PC-9 (cell line): ENCODE measurements at regions of chr10 and their contacts with region 1.

Region 1: GRCh38 chr10:31864834-31865518 is 63.7 kb downstream of the ARHGAP12 start:
- DNase-seq: no peak
- H3K4me3 ChIP-seq: no peak overlapping the region
- H3K27ac ChIP-seq: 0 out of 2 replicates have a peak overlapping the region, but pooled peaks have one; percentile 23
- H3K4me1 ChIP-seq: 0 out of 2 replicates have a peak, but pooled peaks cover 6% of the 10 kb centered on the region
- H3K27me3 ChIP-seq: no peaks in the 10 kb centered on the region
- CTCF ChIP-seq: no peak

Region 2: GRCh38 chr10:31851216-31851615 is 13.8 kb before region 1 on chr10:
- CTCF ChIA-PET with region 1: no interaction called
- POLR2A ChIA-PET with region 1: no interaction called
- intact Hi-C with region 1: no loop called
- DNase-seq: no peak
- H3K4me3 ChIP-seq: no peak overlapping the region
- H3K27ac ChIP-seq: no peak overlapping the region
- H3K4me1 ChIP-seq: no peaks in the 10 kb centered on the region
- H3K27me3 ChIP-seq: no peaks in the 10 kb centered on the region
- CTCF ChIP-seq: no peak

Region 3: DNA sequence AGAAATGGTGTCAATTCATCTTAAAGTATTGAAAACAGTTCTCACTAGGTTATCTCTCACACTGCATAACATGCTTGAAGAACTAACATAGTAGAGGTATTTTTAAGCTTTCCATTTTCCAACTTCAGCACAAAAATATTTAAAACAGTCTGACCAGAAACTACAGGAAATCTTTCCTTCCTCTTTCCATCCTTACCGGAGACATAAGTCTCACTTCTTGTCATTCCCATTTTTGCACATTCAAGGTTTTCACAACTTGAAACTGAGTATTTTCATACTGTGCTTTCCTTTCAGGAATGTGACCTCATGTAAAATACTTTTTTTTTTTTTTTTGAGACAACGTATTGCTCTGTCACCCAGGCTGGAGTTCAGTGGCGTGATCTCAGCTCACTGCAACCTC is 18.4 kb after region 1 on chr10:
- CTCF ChIA-PET with region 1: no interaction called
- POLR2A ChIA-PET with region 1: interaction called, 14 read pairs
- intact Hi-C with region 1: no loop called
- DNase-seq: no peak
- H3K4me3 ChIP-seq: no peak overlapping the region
- H3K27ac ChIP-seq: no peak overlapping the region
- H3K4me1 ChIP-seq: no peaks in the 10 kb centered on the region
- H3K27me3 ChIP-seq: no peaks in the 10 kb centered on the region
- CTCF ChIP-seq: no peak

Region 4: DNA sequence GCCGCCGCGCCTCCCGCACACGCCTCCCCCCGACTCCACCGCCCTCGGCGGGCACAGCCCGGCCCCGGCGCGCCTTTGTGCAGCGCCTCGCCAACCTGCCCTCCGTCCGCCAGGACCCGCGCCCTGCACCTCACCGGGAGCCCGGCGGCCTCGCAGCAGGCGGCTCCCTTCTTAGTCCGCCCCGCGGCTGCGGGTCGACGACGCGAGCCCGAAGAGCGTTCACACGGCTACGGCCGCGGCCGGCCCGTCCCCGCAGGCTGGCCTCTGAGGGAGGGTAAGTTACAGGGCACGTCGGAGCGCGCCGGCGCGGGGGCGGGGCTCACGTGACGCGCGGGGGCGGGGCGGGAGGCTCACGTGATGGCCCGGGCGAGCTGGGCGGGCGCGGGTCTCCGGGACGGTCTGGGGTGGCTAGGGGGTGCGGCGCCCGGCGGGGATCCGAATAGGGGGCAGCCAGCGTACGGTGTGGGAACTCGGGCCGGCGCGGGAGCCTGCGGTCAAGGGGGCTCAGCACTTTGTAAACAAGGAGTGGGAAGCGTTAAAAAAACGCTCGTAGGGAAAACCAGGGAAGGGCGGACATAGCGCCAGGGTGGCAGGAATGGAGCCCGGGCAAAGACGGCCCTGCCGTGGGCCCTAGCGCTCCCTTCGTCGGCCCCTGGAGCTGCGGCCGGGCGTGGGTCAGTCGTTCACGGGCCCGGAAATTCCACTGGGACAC is 63.7 kb after region 1 on chr10 and contains the start of gene ARHGAP12:
- CTCF ChIA-PET with region 1: interaction called, 3 read pairs
- POLR2A ChIA-PET with region 1: interaction called, 10 read pairs
- intact Hi-C with region 1: loop called (anchors 5 kb)
- DNase-seq: peak; percentile 51 to 91
- H3K4me3 ChIP-seq: peak within 1 kb of the TSS; percentile 77
- H3K27ac ChIP-seq: peak within 1 kb of the TSS; percentile 69
- H3K4me1 ChIP-seq: peaks cover 49% of the 10 kb centered on the region
- H3K27me3 ChIP-seq: no peaks in the 10 kb centered on the region
- CTCF ChIP-seq: no peak
- total RNA-seq, gene ARHGAP12: 34.3 and 51.9 TPM in 2 replicates

Region 5: DNA sequence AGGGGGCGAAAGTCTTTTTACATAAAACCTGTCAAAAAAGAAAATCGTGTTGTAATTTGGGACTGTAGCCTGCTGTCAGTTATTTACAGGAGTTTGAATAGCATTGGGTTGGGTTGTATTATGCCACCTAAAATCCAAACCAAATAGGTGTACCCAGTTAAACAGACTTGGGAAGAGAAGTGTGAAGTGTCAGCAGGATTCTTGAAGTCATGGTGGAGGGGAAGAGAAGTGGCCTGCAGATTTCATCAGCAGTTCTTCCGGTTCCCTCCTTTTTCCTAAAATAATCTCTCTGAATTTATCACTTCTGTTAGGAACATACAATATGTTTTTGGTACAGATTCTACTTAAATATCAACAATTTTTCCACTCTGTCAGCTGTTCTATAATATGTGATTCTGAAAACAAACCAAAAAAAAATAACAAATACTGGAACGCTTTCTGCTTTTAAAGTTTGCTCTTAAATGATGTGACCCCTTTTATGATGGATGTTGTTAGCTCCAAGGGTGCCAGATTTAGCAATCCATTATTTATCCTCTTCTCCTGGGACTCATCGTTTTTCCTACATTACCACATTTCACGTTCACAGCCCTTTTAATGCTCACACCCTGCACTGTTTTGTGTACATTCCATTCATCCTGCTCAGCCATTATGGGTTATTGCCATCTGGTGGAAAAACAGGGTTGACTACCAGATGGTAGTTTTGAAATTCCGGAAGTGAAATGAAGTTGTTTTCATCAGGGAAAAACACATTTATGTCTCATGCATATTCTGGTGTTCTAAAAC is 82.4 kb after region 1 on chr10:
- CTCF ChIA-PET with region 1: interaction called, 5 read pairs
- POLR2A ChIA-PET with region 1: interaction called, 4 read pairs
- intact Hi-C with region 1: loop called (anchors 1 kb)
- DNase-seq: peak; percentile 46 to 87
- H3K4me3 ChIP-seq: no peak overlapping the region; the same call in 1 of the 2 replicates
- H3K27ac ChIP-seq: peak overlapping the region; percentile 75
- H3K4me1 ChIP-seq: peaks cover 54% of the 10 kb centered on the region
- H3K27me3 ChIP-seq: no peaks in the 10 kb centered on the region
- CTCF ChIP-seq: peak; percentile 47